ENCODE measurements at regions of chr3 and their contacts with region 1.

Region 1: DNA sequence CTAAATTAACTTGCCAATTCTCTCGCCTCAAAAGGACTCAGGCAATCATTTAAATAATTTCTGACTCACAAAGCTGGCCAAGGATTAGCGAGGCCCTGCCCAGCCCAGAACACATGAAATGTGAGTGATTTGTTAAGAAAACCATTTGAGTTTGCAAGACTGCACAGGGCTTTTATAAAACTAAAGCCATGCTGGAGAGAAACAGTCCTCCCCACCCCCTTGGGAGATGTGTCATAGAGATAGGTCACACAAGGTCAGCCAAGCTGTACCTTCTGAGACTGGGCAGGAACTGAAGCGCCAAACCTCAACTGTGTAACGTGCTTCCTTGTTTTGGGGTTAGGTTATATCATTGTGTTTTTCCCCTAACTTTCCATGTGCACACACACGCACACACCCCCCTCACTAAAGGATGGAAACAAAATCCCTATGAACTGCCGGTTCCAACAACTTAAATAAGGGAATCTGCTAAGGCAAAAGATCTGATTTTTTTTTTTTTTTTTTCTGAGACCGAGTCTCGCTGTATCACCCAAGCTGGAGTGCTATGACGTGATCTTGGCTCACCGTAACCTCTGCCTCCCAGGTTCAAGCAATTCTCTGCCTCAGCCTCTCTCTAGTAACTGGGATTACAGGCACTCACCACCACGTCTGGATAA is 8.1 kb downstream of the SPATA12 start:
- DNase-seq: peak; percentile 52
- ATAC-seq: peak; percentile 97
- H3K4me3 Mint-ChIP-seq: peak overlapping the region; percentile 62
- H3K27ac Mint-ChIP-seq: peak overlapping the region; percentile 88
- H3K4me1 Mint-ChIP-seq: peaks cover 27% of the 10 kb centered on the region
- H3K27me3 Mint-ChIP-seq: peaks cover 22% of the 10 kb centered on the region
- CTCF ChIP-seq: no peak

Region 2: GRCh38 chr3:56556908-56557830 is 511.4 kb before region 1 on chr3 and contains the start of gene CCDC66:
- CTCF ChIA-PET with region 1: no interaction called
- POLR2A ChIA-PET with region 1: no interaction called
- intact Hi-C with region 1: loop called (anchors 5 kb)
- DNase-seq: peak; percentile 84
- ATAC-seq: peak; percentile 98
- H3K4me3 Mint-ChIP-seq: peak within 1 kb of the TSS; percentile 98
- H3K27ac Mint-ChIP-seq: peak within 1 kb of the TSS; percentile 97
- H3K4me1 Mint-ChIP-seq: peaks cover 20% of the 10 kb centered on the region
- H3K27me3 Mint-ChIP-seq: no peaks in the 10 kb centered on the region
- CTCF ChIP-seq: no peak
- total RNA-seq, gene CCDC66: 29.1 and 34.9 TPM in 2 replicates

Region 3: GRCh38 chr3:56997675-56998074 is 70.9 kb before region 1 on chr3:
- CTCF ChIA-PET with region 1: interaction called, 6 read pairs
- POLR2A ChIA-PET with region 1: interaction called, 4 read pairs
- intact Hi-C with region 1: loop called (anchors 1 kb)
- DNase-seq: no peak
- ATAC-seq: no peak
- H3K4me3 Mint-ChIP-seq: no peak overlapping the region
- H3K27ac Mint-ChIP-seq: no peak overlapping the region
- H3K4me1 Mint-ChIP-seq: peaks cover 6% of the 10 kb centered on the region
- H3K27me3 Mint-ChIP-seq: peaks cover 3% of the 10 kb centered on the region
- CTCF ChIP-seq: no peak

Region 4: DNA sequence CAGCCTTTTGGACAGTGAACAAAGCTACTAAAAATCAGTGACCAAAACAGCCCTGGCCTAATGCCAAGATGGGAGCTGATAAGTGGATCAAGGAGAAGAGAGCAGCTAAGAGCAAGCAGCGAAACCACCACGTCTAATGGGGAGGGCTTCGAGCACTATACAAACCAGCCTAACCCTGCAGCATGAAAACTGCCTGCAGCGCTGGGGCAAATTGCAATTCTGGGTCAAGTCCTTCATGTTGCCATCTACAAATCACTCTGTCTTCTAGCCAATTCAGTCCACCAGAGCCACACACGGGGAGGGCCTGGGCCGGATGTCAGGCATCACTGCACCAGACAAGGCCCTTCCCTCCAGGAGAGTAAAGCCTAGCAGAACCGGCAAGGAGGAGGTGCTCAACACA is 38.6 kb before region 1 on chr3:
- CTCF ChIA-PET with region 1: no interaction called
- POLR2A ChIA-PET with region 1: no interaction called
- intact Hi-C with region 1: loop called (anchors 5 kb)
- DNase-seq: no peak
- ATAC-seq: no peak
- H3K4me3 Mint-ChIP-seq: no peak overlapping the region
- H3K27ac Mint-ChIP-seq: no peak overlapping the region
- H3K4me1 Mint-ChIP-seq: peaks cover 5% of the 10 kb centered on the region
- H3K27me3 Mint-ChIP-seq: no peaks in the 10 kb centered on the region
- CTCF ChIP-seq: no peak

Region 5: DNA sequence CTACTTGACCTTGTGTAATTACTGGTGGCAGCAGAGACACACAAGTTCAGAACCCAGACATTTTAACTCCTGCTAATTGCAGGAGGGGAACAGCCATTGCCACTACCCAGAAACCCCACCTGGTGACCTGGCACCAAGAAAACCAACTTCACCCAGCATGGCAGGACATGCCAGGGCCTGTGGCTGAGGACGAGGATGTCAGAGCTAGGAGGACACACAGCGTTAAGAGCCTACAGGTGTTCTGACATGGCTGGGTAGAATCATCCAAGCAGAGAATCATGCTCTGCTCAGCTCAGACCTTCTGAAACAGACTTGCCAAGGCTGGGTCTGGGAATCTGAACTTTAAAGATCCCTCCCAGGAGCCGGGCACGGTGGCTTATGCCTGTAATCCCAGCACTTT is 19.8 kb before region 1 on chr3:
- CTCF ChIA-PET with region 1: no interaction called
- POLR2A ChIA-PET with region 1: no interaction called
- intact Hi-C with region 1: no loop called
- DNase-seq: no peak
- ATAC-seq: no peak
- H3K4me3 Mint-ChIP-seq: no peak overlapping the region
- H3K27ac Mint-ChIP-seq: no peak overlapping the region
- H3K4me1 Mint-ChIP-seq: peaks cover 2% of the 10 kb centered on the region
- H3K27me3 Mint-ChIP-seq: peaks cover 17% of the 10 kb centered on the region
- CTCF ChIP-seq: no peak

Region 6: GRCh38 chr3:58200846-58201355 is 1132.3 kb after region 1 on chr3:
- CTCF ChIA-PET with region 1: no interaction called
- POLR2A ChIA-PET with region 1: interaction called, 3 read pairs
- intact Hi-C with region 1: loop called (anchors 1 kb)
- DNase-seq: no peak
- ATAC-seq: no peak
- H3K4me3 Mint-ChIP-seq: peak overlapping the region; percentile 64
- H3K27ac Mint-ChIP-seq: peak overlapping the region; percentile 70
- H3K4me1 Mint-ChIP-seq: peaks cover 66% of the 10 kb centered on the region
- H3K27me3 Mint-ChIP-seq: no peaks in the 10 kb centered on the region
- CTCF ChIP-seq: no peak

Measured in activated B cell treated with CpG ODN at 0.5 μM for 24 hours (primary cell).